HEK293T (cell line): ENCODE measurements at regions of chr11 and their contacts with region 1.

Region 1: GRCh38 chr11:43504316-43504950 is 145.7 kb downstream of the TTC17 start:
- DNase-seq: peak; percentile 43

Region 2: GRCh38 chr11:43567396-43567975 is 63.1 kb after region 1 on chr11:
- CTCF ChIA-PET with region 1: interaction called, 12 read pairs
- POLR2A ChIA-PET with region 1: no interaction called
- DNase-seq: peak; percentile 64

Region 3: DNA sequence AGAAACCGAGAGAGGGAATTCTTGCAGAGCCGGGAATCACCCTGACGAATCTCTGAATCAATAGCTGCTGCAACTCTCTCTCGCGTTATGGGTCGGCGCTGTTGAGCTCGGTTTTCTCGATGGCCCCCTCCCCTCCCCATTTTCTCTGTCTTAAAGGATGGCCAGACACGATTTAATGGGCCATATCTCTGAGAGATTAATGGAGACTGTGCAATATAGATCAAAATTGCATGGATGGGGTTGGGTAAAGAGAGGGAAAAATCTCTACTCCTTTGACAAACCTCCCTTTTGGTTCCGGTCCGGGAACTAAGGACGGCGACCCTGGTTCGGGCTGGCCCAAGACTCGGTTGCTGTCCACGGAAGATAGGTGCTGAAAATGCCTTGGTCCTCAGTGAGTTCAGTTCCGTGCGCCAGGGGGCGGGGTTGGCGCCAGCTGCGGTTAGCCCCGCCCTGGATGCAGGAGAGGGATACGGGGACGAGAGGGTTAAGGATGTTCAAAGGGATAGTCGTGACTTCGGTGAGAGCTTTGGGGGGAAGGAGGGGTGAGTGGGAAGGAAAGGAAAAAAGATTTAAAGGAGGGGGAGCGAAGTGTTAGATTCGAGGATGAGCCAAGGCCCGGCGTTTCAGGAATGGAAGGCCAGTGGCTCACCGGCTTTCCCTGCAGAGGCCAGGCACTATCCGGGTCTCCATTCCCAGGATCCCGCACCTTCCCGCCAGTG is 72.5 kb after region 1 on chr11:
- CTCF ChIA-PET with region 1: interaction called, 14 read pairs
- POLR2A ChIA-PET with region 1: no interaction called
- DNase-seq: peak; percentile 70